ENCODE measurements at regions of chr12 and their contacts with region 1.

Region 1: DNA sequence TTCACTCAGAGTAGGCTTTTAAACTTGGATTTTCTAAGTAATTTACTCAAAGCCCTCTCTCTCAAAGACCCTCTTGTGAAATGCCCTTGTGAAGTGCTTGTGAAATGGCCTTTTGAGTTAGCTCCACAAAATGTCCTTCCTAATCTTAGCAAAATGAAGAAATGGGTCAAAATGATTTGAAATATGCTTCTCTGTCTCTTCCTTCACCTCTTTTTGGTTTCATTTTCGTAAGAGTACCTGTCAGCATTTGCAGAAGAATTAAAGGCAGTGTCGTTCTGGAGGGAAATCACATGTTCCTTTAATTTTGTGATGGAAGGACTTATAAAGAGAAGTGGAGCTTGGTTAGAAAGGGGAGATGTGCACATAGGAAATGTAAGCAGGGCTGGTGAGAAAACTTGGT is 93.7 kb downstream of the HMGA2 start:
- DNase-seq: no peak
- H3K4me3 ChIP-seq: no peak overlapping the region
- H3K27me3 ChIP-seq: no peaks in the 10 kb centered on the region
- CTCF ChIP-seq: no peak

Region 2: DNA sequence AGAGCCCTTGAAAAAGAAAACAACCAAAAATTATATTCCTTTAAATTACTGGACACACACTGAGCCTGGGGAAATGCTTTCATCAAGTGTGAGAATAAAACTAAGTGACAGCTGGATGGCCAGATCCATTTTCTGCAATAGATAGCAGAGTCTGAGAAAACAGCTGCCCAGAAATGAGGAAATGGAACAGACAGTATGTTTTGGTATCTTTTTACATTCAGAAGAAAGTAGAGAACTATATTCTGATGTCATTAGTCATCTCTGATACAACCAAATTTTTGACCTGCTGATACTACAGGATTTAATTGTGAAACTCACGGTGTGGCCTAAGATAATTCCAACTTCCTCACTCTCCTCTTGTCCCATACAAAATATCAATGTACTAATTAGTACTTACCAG is 15.5 kb before region 1 on chr12:
- CTCF ChIA-PET with region 1: interaction called, 11 read pairs
- POLR2A ChIA-PET with region 1: no interaction called
- DNase-seq: no peak
- H3K4me3 ChIP-seq: no peak overlapping the region
- H3K27me3 ChIP-seq: no peaks in the 10 kb centered on the region
- CTCF ChIP-seq: no peak